Sciatic nerve (tissue), 2 donors: ENCODE measurements at regions of chr1 and their contacts with region 1.

Region 1: DNA sequence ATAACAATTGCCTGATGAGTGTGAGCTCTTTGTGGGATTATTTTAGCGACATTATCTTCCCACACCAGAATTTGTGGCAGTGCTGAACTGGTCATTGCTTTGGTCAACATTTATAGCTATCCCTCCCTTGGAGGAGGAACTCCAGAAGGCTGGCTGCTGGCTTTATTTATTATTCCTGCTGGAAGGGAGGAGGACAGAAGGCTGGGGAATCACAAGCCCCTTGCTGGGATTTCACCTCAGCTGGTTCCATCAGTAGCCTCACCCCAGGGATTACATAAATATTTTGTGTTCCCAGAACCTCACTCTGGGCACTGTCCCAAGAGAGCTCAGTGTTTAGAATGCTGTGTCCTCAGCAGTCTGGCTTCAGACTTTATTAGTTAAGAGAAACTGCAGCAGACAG is 102.8 kb upstream of the C1orf21 start:
- DNase-seq: no peak
- ATAC-seq: no peak

Region 2: GRCh38 chr1:182680901-182681567 is 1603.0 kb before region 1 on chr1:
- intact Hi-C with region 1: loop called (anchors 5 kb)
- DNase-seq: no peak
- ATAC-seq: no peak

Region 3: GRCh38 chr1:184465489-184466146 is 181.6 kb after region 1 on chr1:
- intact Hi-C with region 1: no loop called
- DNase-seq: no peak
- ATAC-seq: no peak